Breast epithelium (tissue), 4 donors: ENCODE measurements at regions of chr22 and their contacts with region 1.

Region 1: DNA sequence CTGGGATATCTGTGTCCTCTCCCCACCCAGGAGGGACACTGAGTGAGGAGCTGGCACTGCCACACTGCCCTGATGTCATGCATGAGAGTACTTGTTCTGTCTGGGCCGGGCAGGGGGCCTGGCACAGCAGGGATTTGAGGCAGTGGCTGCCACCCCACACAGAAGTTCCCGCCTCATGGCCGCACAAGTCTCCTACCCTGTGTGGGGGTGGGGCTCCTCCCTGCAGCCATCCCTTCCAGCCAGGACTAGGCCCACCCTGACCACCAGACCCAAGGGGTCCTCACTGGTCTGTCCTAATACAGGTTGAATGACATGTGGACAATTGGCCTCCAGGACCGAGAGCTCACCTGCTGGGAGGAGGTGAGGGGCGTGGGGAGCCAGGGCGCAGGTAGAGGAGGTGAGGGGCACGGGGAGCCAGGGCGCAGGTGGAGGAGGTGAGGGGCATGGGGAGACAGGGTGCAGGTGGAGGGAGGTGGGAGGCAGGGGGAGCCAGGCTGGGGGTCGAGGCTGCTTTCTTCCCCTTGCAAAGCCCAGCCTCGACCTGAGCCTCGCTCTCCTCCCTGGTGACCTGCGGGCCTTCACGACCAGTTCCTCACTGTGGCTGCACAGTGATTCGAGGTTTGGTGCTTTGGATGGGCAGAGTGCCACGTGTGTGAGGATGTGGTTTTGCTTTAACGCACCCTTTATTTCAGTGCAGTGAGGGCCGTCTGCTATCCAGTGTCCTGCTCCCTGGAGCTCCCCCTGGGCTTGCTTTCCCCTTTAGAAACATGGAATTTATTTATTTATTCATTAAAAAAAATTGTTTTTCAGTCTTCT is 7.4 kb downstream of the LZTR1 start:
- DNase-seq: no peak
- H3K4me3 ChIP-seq: no peak overlapping the region
- H3K27ac ChIP-seq: no peak overlapping the region
- H3K4me1 ChIP-seq: no peaks in the 10 kb centered on the region
- H3K27me3 ChIP-seq: no peaks in the 10 kb centered on the region
- CTCF ChIP-seq: no peak
- POLR2A ChIP-seq: no peak

Region 2: GRCh38 chr22:20531315-20532201 is 458.0 kb before region 1 on chr22:
- intact Hi-C with region 1: no loop called
- DNase-seq: peak in 1 of 2 donors; percentile 63
- H3K4me3 ChIP-seq: peak overlapping the region in 1 of 3 donors; percentile 24
- H3K27ac ChIP-seq: peak overlapping the region; percentile 69 to 79
- H3K4me1 ChIP-seq: peaks cover 13 to 27% of the 10 kb centered on the region in 2 donors
- H3K27me3 ChIP-seq: no peaks in the 10 kb centered on the region
- CTCF ChIP-seq: no peak
- POLR2A ChIP-seq: no peak

Region 3: DNA sequence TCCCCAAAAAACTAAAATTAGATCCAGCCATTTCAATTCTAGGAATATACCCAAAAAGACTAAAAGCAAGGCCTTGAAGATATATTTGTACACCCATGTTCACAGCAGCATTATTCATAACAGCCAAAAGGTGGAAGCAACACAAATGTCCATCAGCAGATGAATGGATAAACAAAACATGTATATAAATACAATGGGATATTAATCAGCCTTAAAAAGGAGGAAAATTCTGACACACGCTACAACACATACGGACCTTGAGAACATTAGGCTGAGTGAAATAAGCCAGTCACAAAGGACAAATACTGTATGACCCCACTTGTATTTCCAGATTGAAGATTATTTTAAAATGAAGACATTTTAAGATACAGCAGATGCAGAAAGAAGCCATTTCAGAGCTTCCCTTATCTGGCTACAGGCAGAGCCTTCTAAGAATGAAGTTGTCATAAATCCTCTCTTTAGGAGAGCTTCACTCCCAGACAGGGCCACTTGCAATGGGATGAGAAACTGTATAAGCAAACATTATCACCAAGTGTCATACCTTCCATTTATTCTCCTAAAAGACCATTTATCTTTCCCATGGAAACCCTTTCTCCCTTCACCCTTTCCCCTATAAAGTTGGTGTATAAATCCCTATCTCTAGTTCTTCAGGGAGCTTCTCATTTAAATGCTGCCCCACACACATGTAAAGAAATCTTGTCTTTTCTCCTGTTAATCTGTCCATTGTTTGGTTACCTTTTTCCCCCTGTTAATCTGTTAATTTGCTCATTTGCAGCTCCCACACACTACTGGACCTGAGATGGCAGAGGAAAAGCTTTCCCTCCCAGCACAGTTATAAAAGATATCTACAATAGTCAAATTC is 1012.4 kb after region 1 on chr22:
- intact Hi-C with region 1: loop called (anchors 5 kb)
- DNase-seq: no peak
- H3K4me3 ChIP-seq: no peak overlapping the region
- H3K27ac ChIP-seq: no peak overlapping the region
- H3K4me1 ChIP-seq: no peaks in the 10 kb centered on the region
- H3K27me3 ChIP-seq: no peaks in the 10 kb centered on the region
- CTCF ChIP-seq: no peak
- POLR2A ChIP-seq: no peak